T-cell (primary cell): ENCODE measurements at regions of chr2 and their contacts with region 1.

Region 1: GRCh38 chr2:224819075-224819474 is 102.9 kb upstream of the CCDC195 start:
- DNase-seq: no peak
- ATAC-seq: no peak
- H3K4me3 ChIP-seq: no peak overlapping the region
- H3K4me3 Mint-ChIP-seq: no peak overlapping the region
- H3K27ac ChIP-seq: no peak overlapping the region
- H3K27ac Mint-ChIP-seq: peak overlapping the region; percentile 9 to 81
- H3K4me1 ChIP-seq: no peaks in the 10 kb centered on the region
- H3K4me1 Mint-ChIP-seq: no peaks in the 10 kb centered on the region
- H3K27me3 ChIP-seq: no peaks in the 10 kb centered on the region
- H3K27me3 Mint-ChIP-seq: no peaks in the 10 kb centered on the region

Region 2: GRCh38 chr2:224628416-224628815 is 190.7 kb before region 1 on chr2:
- CTCF ChIA-PET with region 1: no interaction called
- POLR2A ChIA-PET with region 1: interaction called in 1 of 2 experiments, 13 read pairs
- DNase-seq: no peak
- ATAC-seq: no peak
- H3K4me3 ChIP-seq: no peak overlapping the region
- H3K4me3 Mint-ChIP-seq: no peak overlapping the region
- H3K27ac ChIP-seq: no peak overlapping the region
- H3K27ac Mint-ChIP-seq: no peak overlapping the region
- H3K4me1 ChIP-seq: no peaks in the 10 kb centered on the region
- H3K4me1 Mint-ChIP-seq: no peaks in the 10 kb centered on the region
- H3K27me3 ChIP-seq: peaks cover 0 to 3% of the 10 kb centered on the region in 2 experiments
- H3K27me3 Mint-ChIP-seq: no peaks in the 10 kb centered on the region

Region 3: DNA sequence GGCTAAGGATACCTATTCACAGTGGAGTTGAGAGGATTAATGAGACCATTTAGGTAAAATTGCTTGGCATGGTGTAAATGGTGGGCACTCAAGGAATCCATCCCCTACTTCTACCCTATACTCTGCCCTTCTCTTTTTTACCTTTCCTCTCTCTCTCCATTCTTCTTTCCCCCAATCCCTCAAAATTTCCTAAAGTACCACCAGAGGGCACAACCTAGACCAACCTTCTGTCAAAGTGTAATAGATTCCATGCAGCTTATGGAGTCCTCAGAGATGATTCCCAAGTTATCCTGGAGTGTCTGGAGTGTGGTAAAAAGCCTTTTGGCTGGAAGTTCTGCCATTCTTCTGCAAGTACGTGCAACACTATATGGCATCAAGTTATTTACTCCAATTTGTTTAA is 69.9 kb before region 1 on chr2:
- CTCF ChIA-PET with region 1: no interaction called
- POLR2A ChIA-PET with region 1: no interaction called
- DNase-seq: no peak
- ATAC-seq: no peak
- H3K4me3 ChIP-seq: no peak overlapping the region
- H3K4me3 Mint-ChIP-seq: no peak overlapping the region
- H3K27ac ChIP-seq: no peak overlapping the region
- H3K27ac Mint-ChIP-seq: no peak overlapping the region
- H3K4me1 ChIP-seq: no peaks in the 10 kb centered on the region
- H3K4me1 Mint-ChIP-seq: no peaks in the 10 kb centered on the region
- H3K27me3 ChIP-seq: peaks cover 0 to 3% of the 10 kb centered on the region in 2 experiments
- H3K27me3 Mint-ChIP-seq: peaks cover 3 to 5% of the 10 kb centered on the region in 2 donors

Region 4: DNA sequence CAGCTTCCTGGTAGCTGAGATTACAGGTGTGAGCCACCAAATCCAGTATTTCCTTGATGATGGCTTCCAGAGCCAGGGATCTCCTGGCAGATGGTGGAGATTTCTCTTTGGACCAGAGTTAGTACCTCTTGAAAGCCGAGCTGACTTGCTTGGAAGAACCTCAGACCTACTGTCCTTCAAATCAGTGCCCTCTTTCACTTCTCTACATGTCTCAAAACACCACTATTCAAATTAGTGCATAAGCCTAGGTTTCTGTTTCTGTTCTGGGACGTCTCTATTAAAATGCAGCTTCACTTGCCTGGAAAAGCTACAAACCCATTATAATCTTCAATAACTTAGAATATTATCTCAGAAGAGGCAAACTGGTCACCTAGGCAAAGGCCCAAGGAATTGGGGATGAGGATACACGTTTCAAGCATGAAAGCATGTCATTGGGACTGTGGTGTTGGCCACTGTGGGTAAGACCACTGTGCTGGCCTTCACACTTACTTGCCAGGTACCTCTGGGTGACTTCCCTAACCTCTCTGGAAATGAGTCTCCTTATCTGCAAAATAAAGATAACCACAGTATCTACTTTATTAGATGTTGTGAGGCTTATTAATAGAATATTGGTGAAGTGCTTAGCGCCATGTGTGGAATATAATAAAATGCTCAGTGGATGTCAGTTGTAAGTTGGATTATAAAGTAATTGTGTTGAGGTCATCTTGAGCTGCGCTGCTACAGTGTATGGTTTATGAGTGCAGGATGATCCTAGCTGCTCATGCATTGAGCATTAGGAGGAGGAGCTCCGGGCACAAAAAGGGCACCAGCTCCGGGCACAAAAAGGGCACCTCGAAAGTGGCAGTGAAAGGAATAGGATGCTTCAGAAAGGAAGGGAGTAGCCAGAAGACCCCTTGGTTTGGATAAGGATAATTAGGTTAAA is 138.7 kb after region 1 on chr2:
- CTCF ChIA-PET with region 1: no interaction called
- POLR2A ChIA-PET with region 1: interaction called in 1 of 2 experiments, 10 read pairs
- DNase-seq: peak in 1 of 35 experiments; percentile 33
- ATAC-seq: peak in 1 of 4 experiments; percentile 38
- H3K4me3 ChIP-seq: no peak overlapping the region
- H3K4me3 Mint-ChIP-seq: peak overlapping the region in 2 of 3 donors; percentile 5 to 18
- H3K27ac ChIP-seq: peak overlapping the region; percentile 54
- H3K27ac Mint-ChIP-seq: peak overlapping the region; percentile 82 to 83
- H3K4me1 ChIP-seq: peaks cover 10 to 24% of the 10 kb centered on the region in 2 experiments
- H3K4me1 Mint-ChIP-seq: peaks cover 83 to 89% (median 84%) of the 10 kb centered on the region in 3 donors
- H3K27me3 ChIP-seq: no peaks in the 10 kb centered on the region
- H3K27me3 Mint-ChIP-seq: no peaks in the 10 kb centered on the region